SK-N-SH (cell line): ENCODE measurements at regions of chr2 and their contacts with region 1.

Region 1: GRCh38 chr2:12766421-12766879 is 49.7 kb downstream of the TRIB2 start:
- DNase-seq: no peak
- H3K4me3 ChIP-seq: no peak overlapping the region
- H3K27ac ChIP-seq: peak overlapping the region in 1 of 2 experiments; percentile 65; a peak in 2 of 4 replicates
- H3K4me1 ChIP-seq: peaks cover 0 to 26% of the 10 kb centered on the region in 2 experiments; a peak in 1 of 4 replicates
- H3K27me3 ChIP-seq: no peaks in the 10 kb centered on the region
- CTCF ChIP-seq: no peak
- EP300 ChIP-seq: no peak
- RAD21 ChIP-seq: no peak

Region 2: GRCh38 chr2:12754643-12755042 is 11.8 kb before region 1 on chr2:
- CTCF ChIA-PET with region 1: interaction called, 12 read pairs
- POLR2A ChIA-PET with region 1: no interaction called
- DNase-seq: no peak
- H3K4me3 ChIP-seq: no peak overlapping the region
- H3K27ac ChIP-seq: no peak overlapping the region
- H3K4me1 ChIP-seq: peaks cover 8 to 12% of the 10 kb centered on the region in 2 experiments
- H3K27me3 ChIP-seq: no peaks in the 10 kb centered on the region
- CTCF ChIP-seq: no peak
- EP300 ChIP-seq: no peak
- RAD21 ChIP-seq: no peak

Region 3: DNA sequence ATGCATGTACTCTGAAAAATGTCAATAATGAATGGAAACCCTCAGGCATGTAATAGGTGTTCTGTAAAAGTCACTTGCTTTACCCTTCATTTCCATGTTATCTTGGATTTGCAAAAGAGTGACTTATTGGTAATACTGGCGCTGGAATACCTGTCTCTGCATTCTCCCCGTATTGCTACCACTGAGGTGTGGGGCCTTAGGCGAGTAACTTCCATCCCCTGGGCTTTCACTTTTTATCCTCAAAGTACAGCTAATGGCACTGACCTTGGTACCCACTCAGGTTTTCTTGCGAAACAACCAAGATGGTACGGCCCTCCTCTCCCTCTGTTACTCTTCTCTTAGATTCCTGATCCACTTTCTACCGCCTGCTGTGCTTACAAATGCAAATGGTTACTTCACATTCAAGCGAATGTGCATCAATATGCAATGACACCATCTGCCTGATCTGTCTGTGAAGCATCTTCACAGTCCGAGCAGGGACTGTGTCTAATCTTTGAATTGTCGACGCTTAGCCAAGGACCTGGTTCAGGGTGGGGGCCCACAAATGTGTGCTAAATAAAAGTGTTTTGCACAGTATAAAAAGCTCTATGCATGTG is 62.4 kb after region 1 on chr2:
- CTCF ChIA-PET with region 1: no interaction called
- POLR2A ChIA-PET with region 1: no interaction called
- DNase-seq: no peak
- H3K4me3 ChIP-seq: no peak overlapping the region
- H3K27ac ChIP-seq: no peak overlapping the region
- H3K4me1 ChIP-seq: peaks cover 0 to 7% of the 10 kb centered on the region in 2 experiments; a peak in 2 of 4 replicates
- H3K27me3 ChIP-seq: no peaks in the 10 kb centered on the region
- CTCF ChIP-seq: no peak
- EP300 ChIP-seq: no peak
- RAD21 ChIP-seq: no peak